Motor neuron (in vitro differentiated cells): ENCODE measurements at regions of chr10 and their contacts with region 1.

Region 1: DNA sequence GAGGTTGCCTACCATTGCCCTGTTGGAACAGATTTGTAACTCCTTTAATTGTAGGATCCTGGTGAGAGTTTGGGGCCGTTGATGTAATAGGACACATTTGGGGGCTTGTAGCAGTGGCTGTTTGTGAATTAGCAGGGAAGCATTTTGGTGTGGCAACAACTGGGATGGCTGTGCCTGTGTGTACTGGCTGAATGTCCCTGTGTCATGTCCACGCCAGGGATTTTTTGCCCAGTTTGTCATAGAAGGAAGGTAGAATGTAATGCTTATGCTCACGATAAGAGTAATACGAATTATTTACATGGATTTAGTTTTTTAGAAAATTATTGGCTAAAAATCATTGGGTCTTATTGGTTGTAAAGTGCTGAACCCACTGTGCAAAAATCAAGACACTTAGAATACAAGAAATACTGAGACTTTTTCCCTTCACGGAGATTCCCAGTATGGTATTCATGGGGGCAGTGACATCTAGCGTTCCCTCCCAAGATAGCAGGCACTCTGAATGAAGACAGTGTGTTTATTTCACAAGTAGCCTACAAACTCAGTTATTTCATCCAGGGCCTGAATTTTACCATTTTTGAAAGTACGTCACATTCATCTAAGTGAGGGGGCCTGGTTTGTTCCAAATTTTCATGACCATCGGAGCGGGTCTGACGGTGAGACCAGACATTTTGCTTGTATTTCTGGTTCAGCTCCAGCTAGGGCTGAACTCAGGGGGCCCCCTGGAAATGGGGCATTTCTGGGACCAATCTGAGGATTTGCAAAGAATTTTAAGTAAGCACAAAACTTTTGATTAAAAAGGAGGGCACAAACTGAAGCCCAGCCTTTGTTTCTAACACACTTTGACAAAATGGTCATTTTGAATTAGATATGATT is 74.7 kb downstream of the CACNB2 start:
- ATAC-seq: peak; percentile 63 to 86 (median 70)
- H3K4me3 ChIP-seq: no peak overlapping the region
- H3K27ac ChIP-seq: no peak overlapping the region
- H3K4me1 ChIP-seq: peaks cover 0 to 3% of the 10 kb centered on the region in 2 donors

Region 2: DNA sequence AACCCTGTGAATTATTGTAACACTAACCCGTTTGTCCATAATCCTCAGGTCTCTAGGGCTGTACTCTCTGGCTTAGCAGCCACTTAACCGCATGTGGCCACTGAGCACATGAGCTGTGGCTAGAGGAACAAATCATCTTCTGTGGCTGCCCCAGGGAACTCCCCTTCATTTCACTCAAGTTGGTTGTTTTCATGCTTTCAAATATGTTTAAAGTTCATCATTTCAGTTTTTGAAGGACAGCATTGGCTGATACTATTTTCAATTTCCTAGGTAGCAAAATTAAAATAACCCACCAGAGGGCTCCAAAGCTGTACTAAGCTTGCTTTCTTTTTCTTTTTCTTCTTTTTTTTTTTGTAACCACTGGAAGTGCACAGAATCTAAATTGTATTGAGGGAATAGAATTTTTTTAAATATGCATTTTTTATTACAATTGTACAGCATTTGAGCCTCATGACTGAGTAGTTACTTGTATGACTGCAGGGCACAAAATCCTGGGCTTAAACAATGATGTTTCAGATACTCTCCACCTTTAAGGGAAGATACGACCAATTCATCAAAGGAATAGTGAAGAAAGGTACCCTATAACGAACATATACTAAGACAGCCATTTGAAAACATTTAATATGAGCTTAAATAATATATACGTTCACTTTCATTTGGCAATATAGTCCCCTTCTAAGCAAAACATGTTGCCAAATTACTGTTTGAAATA is 367.2 kb before region 1 on chr10:
- in situ Hi-C with region 1: loop called in 5 of 9 experiments (anchors 10 to 25 kb)
- ATAC-seq: peak in 7 of 8 experiments; percentile 18 to 72 (median 41)
- H3K4me3 ChIP-seq: no peak overlapping the region
- H3K27ac ChIP-seq: no peak overlapping the region
- H3K4me1 ChIP-seq: peaks cover 0 to 2% of the 10 kb centered on the region in 2 donors

Region 3: GRCh38 chr10:17872191-17873091 is 342.5 kb before region 1 on chr10:
- in situ Hi-C with region 1: loop called in 2 of 9 experiments (anchors 25 kb)
- ATAC-seq: peak in 6 of 8 experiments; percentile 37 to 91 (median 78)
- H3K4me3 ChIP-seq: no peak overlapping the region
- H3K27ac ChIP-seq: no peak overlapping the region
- H3K4me1 ChIP-seq: peaks cover 0 to 9% of the 10 kb centered on the region in 2 donors

Region 4: GRCh38 chr10:17910125-17910789 is 304.7 kb before region 1 on chr10:
- in situ Hi-C with region 1: loop called in 2 of 9 experiments (anchors 25 kb)
- ATAC-seq: peak; percentile 29 to 95 (median 82)
- H3K4me3 ChIP-seq: no peak overlapping the region
- H3K27ac ChIP-seq: no peak overlapping the region
- H3K4me1 ChIP-seq: peaks cover 0 to 6% of the 10 kb centered on the region in 2 donors